GM10248 (cell line): ENCODE measurements at regions of chr14 and their contacts with region 1.

Region 1: DNA sequence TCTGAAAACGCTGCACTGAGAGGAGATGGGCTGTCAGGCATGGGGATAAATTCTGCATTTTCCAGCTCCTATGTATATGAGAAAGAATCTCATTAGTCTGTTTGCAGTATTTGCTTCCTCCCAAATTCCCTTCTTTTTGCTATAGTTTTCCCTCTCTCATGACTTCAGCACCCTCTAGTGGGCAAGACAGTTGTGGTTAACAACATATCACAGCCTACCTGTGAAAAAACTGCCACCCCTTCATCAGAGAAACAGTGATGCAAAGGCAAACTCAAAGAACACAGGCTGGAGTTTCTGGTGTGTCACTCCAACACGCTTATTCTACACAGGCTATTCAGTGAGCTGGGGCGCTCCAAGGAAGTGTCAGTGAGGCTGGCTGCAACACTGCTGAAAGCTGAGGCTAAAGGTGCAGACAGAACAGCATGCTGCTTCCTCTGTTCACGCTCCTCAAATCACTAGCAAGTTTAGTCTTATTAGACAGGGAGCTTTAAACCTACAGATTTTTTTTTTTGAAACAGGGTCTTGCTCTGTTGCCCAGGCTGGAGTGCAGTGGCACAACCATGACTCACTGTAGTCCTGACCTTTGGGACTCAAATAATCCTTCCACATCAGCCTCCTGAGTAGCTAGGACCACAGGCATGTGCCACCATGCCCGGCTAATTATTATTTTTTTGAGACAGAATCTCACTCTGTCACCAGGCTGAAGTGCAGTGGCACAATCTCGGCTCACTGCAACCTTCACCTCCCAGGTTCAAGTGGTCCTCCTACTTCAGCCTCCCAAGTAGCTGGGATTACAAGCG is 19.3 kb downstream of the ZC2HC1C start:
- DNase-seq: peak; percentile 49
- CTCF ChIP-seq: peak; percentile 56

Region 2: GRCh38 chr14:74867673-74868072 is 221.1 kb before region 1 on chr14:
- CTCF ChIA-PET with region 1: interaction called, 72 read pairs
- POLR2A ChIA-PET with region 1: no interaction called
- DNase-seq: no peak
- CTCF ChIP-seq: no peak

Region 3: GRCh38 chr14:74945823-74946682 is 142.7 kb before region 1 on chr14:
- CTCF ChIA-PET with region 1: interaction called, 44 read pairs
- POLR2A ChIA-PET with region 1: no interaction called
- DNase-seq: peak; percentile 91
- CTCF ChIP-seq: peak; percentile 98

Region 4: DNA sequence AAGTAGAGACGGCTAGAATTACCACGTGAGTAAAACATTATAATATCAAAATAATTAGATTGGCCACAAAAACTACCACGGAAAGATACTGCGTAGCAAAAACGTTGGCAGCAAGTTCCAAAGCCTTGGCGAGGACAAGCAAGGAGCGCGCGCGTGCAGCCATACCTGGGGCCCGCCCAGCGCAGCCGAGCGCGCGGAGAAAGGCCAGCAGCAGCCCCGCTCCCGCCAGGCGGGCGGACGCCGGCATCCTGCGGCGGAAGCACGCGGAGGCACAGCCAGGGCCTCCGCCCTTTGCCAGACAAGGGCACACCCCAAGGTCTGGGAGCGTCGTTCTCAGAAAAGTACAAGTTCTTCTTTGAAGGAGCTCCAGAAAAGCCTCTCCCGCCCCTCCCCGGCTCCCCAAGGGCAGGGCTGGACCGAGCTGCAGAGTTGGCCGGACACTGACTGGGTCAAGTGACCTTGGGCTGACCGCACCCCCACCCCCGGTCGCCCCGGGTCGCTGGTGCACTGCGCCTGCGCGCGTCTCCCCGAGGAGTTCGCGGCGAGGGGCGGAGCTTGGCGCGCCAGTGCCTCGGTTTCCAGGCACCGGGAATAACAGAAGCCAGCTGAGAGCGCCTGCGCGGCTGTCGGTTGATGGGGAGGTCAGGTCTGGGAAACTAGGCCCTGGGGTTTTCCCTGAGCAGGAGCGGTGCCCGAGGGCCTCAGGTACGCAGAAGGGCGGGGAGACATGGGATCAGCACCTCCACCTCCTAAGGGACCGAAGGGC is 19.5 kb before region 1 on chr14 and contains the start of gene ZC2HC1C:
- CTCF ChIA-PET with region 1: interaction called, 27 read pairs
- POLR2A ChIA-PET with region 1: no interaction called
- DNase-seq: peak; percentile 87
- CTCF ChIP-seq: no peak

Region 5: GRCh38 chr14:75101491-75101890 is 12.7 kb after region 1 on chr14:
- CTCF ChIA-PET with region 1: interaction called, 48 read pairs
- POLR2A ChIA-PET with region 1: no interaction called
- DNase-seq: no peak
- CTCF ChIP-seq: no peak

Region 6: DNA sequence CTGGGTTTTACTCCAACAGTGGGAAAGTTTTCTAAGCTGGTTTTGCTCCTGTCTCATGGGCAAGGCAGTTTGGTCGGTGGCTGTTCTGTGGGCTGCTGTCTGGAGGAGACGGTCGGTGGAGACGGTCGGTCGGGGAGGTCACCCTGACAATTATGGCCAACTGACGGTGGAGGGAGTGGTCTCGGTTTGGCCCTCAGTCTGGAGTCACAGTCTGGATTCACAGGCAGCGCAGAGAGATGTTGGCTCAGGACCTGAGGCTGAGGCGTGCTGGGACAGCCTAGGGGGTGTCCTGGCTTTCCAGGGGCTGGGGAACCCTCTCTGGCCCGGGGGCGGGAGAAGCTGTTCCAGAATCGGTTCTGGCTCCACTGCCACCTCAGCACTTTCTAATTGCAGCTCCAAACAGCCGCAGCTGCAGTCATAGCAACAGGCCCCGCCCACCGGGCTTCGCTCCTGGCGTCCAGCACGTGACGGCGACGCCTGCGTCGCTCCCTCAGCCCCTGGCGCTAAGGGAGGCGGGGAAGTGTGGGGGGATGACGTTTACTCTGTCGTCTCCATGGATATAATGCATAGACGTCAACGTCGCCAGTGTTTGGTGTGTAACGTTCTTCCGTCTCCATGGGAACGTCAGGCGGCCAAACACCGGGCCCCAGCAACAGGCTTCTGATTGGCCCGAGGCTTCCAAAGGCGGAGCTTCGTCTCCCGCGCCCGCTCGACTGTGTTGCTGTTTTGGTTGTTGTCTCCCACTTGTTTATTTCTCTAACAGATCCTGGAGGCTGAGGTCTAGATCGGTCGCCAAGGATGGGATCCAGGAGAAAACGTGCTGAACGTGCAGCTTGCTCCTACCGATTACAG is 170.1 kb after region 1 on chr14:
- CTCF ChIA-PET with region 1: no interaction called
- POLR2A ChIA-PET with region 1: no interaction called
- DNase-seq: peak; percentile 95
- CTCF ChIP-seq: no peak